Adrenal gland (tissue), 19 donors: ENCODE measurements at regions of chr3 and their contacts with region 1.

Region 1: GRCh38 chr3:52123106-52123725 is 31.0 kb downstream of the POC1A start:
- DNase-seq: peak; percentile 66 to 94 (median 79)
- H3K4me3 ChIP-seq: no peak overlapping the region
- H3K27ac ChIP-seq: peak overlapping the region in 2 of 5 donors; percentile 29 to 65
- H3K4me1 ChIP-seq: peaks cover 19 to 40% of the 10 kb centered on the region in 2 donors
- H3K27me3 ChIP-seq: no peaks in the 10 kb centered on the region
- CTCF ChIP-seq: peak; percentile 88 to 96 (median 92)
- POLR2A ChIP-seq: no peak

Region 2: DNA sequence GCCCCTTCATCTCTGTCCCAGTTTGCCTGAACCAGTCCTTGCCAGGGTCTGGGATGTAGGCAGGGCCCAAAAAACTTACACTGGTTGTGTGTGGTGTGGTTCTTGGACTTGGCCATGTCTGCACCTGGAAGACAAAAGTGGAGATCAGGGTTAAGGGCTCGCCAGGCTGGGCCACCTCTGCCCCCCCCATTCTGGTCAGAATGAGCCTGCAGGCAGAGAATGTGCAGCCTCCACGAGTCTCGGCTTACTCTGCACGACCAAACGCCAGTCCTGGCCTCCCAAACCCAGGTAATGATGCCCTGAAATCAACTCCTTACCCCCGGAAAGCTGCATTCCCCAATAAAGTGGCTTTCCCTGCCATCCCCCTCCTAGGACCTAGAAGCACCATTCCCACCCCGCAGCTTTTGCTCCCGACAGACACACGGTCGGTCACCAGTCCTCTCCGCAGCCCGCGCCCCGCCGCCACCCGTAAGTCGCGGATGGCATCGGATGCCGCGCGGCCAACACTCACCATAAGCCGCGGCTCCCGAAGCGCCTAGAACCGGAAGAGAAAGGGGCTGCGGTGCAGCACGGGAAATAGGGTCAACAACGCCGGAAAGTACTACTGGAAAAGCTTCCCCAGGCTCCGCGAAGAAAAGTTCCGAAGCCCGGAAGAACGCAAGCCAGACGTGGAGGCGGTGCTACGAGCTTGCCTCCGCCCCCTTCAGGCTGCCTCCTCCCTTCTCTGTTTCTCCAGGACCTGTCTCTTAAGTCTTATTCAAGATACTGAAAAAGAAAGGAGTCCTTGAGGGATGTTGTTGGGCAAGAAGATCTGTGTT is 127.7 kb before region 1 on chr3 and contains the start of gene RPL29:
- intact Hi-C with region 1: loop called (anchors 2 to 5 kb)
- DNase-seq: peak; percentile 92 to 97 (median 94)
- H3K4me3 ChIP-seq: peak within 1 kb of the TSS; percentile 19 to 71 (median 58)
- H3K27ac ChIP-seq: peak within 1 kb of the TSS; percentile 67 to 92 (median 83)
- H3K4me1 ChIP-seq: peaks cover 12 to 22% of the 10 kb centered on the region in 2 donors
- H3K27me3 ChIP-seq: no peaks in the 10 kb centered on the region
- CTCF ChIP-seq: peak; percentile 12 to 39 (median 36)
- POLR2A ChIP-seq: peak; percentile 49 to 64
- total RNA-seq, gene RPL29: 1,018 to 1,982 (median 1,344) TPM

Region 3: DNA sequence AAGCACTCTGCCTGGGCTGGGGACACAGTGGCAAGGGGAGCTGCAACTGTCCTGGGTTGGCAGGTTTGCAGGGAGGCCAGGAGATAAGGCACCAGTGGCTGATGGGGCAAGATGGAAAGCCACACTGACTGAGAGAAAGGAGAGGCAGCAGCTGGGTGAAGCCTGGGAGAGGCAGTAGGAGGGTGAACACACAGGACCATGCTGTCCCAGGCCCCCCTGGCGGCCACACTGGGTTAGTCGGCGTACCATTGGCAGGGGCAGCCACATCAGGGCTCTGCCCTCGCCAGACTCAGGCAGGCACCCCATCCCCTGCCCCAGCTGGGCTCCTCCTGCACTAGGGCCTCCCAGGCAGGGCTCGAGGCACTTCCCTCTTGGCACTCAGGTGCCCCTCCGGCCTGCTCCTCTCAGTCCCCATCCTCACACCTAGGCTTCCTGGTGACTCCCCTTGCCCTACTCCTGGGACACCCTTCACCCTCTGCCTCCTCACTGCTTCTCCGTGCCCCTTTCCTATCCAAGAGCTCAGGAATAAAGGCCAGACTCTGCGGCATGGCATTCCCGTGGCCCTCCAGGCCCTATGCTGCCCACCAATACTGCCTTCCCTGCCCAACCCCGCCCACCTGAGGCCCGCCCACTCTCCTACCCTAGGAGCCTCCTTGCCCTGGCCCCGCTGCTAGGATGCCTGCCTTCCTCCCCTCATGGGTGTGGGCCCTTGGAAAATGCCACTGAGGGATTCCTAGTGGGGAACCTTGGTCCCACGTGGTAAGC is 38.1 kb before region 1 on chr3:
- intact Hi-C with region 1: loop called in 1 of 2 experiments (anchors 5 kb)
- DNase-seq: no peak
- H3K4me3 ChIP-seq: no peak overlapping the region
- H3K27ac ChIP-seq: no peak overlapping the region
- H3K4me1 ChIP-seq: peaks cover 0 to 15% of the 10 kb centered on the region in 2 donors
- H3K27me3 ChIP-seq: no peaks in the 10 kb centered on the region
- CTCF ChIP-seq: no peak
- POLR2A ChIP-seq: no peak